Heart right ventricle (tissue), 16 donors: ENCODE measurements at regions of chr10 and their contacts with region 1.

Region 1: DNA sequence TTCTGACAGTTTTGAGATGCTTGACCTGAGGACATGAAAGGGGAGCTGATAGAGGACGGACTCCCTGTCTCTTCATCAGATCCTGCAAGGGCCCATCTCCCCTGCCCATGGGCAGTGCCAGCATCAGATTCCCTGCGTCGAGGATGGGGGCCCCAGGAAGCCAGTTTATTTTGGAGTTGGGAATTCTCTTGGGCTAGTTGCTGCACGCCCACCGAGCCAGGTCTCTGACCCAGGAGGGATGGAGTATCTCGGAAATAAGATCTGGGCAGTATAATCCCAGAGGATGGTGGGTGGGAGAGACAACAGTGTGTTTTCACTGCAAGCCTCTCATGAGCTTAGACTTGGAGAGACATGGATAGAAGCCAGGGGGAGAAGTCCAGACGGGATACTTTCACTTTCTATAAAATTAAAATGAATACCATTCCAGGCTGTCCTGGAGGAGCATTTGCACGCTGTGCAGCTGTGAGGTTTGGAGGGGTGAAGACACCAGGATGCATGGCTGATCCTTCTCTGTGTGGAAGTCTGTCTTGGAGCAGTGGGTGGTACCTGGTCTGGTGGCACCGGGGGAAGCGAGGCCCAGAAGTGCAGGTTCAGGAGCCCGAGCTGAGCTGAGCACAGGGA is 25.8 kb downstream of the DOCK1 start:
- DNase-seq: no peak
- ATAC-seq: peak in 7 of 8 donors; percentile 44 to 76 (median 68)
- H3K4me3 ChIP-seq: peak overlapping the region in 6 of 10 donors; percentile 12 to 46 (median 38)
- H3K27ac ChIP-seq: peak overlapping the region in 6 of 10 donors; percentile 7 to 49 (median 34)
- H3K4me1 ChIP-seq: peaks cover 4 to 81% (median 30%) of the 10 kb centered on the region in 9 donors
- H3K27me3 ChIP-seq: no peaks in the 10 kb centered on the region
- CTCF ChIP-seq: no peak

Region 2: DNA sequence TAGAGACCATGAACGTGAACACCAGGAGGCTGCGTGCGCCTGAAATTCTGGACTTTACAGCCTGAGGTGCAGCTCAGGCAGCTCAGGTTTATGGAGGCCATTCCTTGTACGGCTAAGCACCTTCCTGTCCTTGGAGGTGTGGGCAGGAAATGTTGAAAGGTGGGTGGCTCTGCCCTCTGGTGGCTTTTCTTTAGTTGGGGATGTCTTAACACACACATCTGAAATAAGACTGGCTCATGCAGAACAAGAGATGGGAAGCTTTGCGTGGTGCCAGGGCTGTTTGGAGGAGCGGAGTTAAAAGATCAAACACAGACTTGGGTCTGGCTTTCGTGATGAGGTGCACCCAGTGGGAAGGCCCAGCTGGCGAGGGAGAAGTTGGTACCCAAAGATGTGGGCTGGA is 38.3 kb after region 1 on chr10:
- intact Hi-C with region 1: loop called in 1 of 10 experiments (anchors 5 kb)
- DNase-seq: no peak
- ATAC-seq: peak in 1 of 8 donors; percentile 37
- H3K4me3 ChIP-seq: no peak overlapping the region
- H3K27ac ChIP-seq: no peak overlapping the region
- H3K4me1 ChIP-seq: peaks cover 0 to 46% (median 9%) of the 10 kb centered on the region in 9 donors
- H3K27me3 ChIP-seq: no peaks in the 10 kb centered on the region
- CTCF ChIP-seq: peak in 4 of 9 donors; percentile 23 to 39 (median 34)